ENCODE measurements at regions of chr3 and their contacts with region 1.

Region 1: DNA sequence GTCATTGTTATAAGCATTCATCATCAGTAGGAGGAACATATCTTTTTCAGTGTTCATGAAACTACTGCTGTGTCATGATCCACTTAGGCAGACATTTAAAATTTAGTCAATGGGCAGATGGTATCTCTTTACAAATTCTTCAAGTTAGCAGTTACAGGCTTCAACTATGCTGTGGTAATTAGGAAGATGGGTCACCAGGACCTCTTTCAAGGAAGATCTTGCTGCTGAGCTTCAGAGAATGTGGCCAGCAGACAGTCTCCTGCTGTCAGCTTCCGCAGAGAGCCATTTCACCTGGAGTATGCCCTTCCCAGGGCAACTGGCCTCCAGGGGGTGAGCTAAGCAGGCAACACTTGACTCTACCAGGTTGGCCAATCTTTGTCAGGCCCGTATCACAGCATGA is 19.4 kb downstream of the IFT57 start:
- DNase-seq: peak; percentile 7
- ATAC-seq: no peak
- H3K4me3 Mint-ChIP-seq: no peak overlapping the region
- H3K27ac Mint-ChIP-seq: no peak overlapping the region
- H3K4me1 Mint-ChIP-seq: peaks cover 32% of the 10 kb centered on the region
- H3K27me3 Mint-ChIP-seq: no peaks in the 10 kb centered on the region

Region 2: GRCh38 chr3:108130701-108131474 is 71.9 kb before region 1 on chr3:
- CTCF ChIA-PET with region 1: no interaction called
- POLR2A ChIA-PET with region 1: no interaction called
- intact Hi-C with region 1: loop called in 1 of 2 experiments (anchors 5 kb)
- DNase-seq: no peak
- ATAC-seq: peak; percentile 37
- H3K4me3 Mint-ChIP-seq: peak overlapping the region; percentile 48
- H3K27ac Mint-ChIP-seq: peak overlapping the region; percentile 93
- H3K4me1 Mint-ChIP-seq: peaks cover 86% of the 10 kb centered on the region
- H3K27me3 Mint-ChIP-seq: no peaks in the 10 kb centered on the region

Measured in activated CD4-positive, alpha-beta T cell treated with anti-CD3 and anti-CD28 coated beads for 36 hours (primary cell).